ENCODE measurements at regions of chr1 and their contacts with region 1.

Region 1: DNA sequence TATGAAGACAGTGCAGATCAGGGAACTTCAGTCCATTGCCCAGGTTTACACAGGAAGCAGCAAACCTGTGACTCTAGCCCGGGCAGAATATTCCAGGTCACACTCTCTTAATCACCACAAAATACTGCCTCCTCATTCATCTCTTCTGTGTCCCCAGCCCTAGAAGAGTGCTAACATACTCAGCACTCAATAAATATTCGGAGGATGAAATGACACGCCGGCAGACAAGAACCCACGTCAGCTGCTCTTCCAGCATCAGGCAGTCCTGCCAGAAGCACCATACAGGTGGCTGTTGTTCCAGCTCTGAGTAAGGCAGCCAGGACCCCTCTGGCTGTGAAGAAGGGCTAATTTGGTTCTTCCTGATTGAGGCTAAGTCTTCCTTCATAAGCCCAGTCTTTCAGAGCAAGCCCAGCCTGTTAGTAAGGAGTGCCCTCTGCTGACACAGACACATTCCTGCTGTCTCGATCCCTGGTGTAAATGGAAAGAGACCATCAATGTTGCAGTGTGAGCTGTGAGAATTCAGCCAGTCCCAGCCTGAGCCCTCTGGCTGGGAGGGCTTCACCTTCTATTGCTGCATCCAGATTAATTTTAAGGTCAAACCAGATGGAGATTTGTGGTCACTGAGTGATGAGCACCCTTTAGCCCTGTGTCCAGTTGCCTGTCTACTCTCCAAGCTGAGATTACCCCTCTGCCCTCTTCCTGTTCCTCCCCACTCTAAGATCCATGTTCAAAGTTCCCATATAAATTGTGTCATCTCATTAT is 45.0 kb upstream of the KIRREL1 start:
- DNase-seq: no peak

Region 2: GRCh38 chr1:157575744-157576143 is 372.7 kb before region 1 on chr1:
- intact Hi-C with region 1: loop called (anchors 10 kb)
- DNase-seq: no peak

Measured in cardiac septum (tissue), 1 donor.